Activated naive CD8-positive, alpha-beta T cell treated with anti-CD3 and anti-CD28 coated beads, Interleukin-2, amount 10 ng/mL, durations not matched to agents 7 days and 5 days (primary cell): ENCODE measurements at regions of chr1 and their contacts with region 1.

Region 1: GRCh38 chr1:209769171-209769904 is 13.5 kb downstream of the TRAF3IP3 start:
- DNase-seq: peak; percentile 67
- ATAC-seq: peak; percentile 62
- H3K4me3 Mint-ChIP-seq: no peak overlapping the region
- H3K27ac Mint-ChIP-seq: no peak overlapping the region
- H3K4me1 Mint-ChIP-seq: peaks cover 41% of the 10 kb centered on the region
- H3K27me3 Mint-ChIP-seq: no peaks in the 10 kb centered on the region

Region 2: DNA sequence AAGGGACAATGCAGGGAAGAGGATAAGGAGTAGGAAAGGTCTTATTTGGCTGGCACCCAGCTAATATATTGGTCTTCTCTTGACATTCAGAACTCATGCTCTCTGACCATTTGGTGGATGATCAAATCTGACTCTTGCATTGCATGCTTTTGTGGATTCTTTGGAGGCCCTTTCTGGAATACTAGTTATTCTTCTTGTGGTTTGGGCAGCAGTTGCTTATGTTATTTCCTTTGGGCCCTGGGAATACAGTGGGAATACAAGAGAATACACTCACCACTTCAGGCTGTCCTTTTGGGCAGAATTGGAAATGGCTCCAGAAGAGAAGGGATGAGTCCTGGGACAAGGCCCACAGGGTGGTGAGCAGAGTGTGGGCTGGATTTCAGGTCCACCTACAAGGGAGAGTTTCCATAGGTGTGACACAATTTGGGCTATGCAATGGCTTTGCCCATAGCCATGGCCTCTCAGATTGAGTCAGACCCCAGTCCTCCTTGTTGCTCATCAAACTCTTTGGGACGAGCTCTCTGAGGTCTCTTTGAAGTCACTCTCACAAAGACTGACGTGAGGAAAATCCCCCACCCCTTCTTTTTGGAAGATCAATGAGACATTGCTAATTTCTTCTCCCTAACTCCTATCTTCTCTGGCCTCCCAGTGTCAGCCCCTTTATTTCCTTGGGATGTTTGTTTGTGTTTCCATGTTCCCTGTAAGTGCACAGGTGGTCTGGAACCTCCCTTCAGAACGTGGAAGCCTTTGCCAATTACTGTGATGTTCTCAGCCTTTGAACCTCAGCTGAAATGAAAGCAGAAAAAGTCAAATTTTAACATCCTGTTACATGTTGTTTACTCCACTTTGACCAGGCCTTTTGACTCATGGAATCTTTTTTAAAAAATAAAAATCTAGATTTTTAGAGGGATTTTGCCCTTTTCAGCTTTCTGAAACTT is 45.3 kb before region 1 on chr1:
- POLR2A ChIA-PET with region 1: no interaction called
- DNase-seq: no peak
- ATAC-seq: peak; percentile 67
- H3K4me3 Mint-ChIP-seq: peak overlapping the region; percentile 47
- H3K27ac Mint-ChIP-seq: peak overlapping the region; percentile 93
- H3K4me1 Mint-ChIP-seq: peaks cover 16% of the 10 kb centered on the region
- H3K27me3 Mint-ChIP-seq: no peaks in the 10 kb centered on the region

Region 3: DNA sequence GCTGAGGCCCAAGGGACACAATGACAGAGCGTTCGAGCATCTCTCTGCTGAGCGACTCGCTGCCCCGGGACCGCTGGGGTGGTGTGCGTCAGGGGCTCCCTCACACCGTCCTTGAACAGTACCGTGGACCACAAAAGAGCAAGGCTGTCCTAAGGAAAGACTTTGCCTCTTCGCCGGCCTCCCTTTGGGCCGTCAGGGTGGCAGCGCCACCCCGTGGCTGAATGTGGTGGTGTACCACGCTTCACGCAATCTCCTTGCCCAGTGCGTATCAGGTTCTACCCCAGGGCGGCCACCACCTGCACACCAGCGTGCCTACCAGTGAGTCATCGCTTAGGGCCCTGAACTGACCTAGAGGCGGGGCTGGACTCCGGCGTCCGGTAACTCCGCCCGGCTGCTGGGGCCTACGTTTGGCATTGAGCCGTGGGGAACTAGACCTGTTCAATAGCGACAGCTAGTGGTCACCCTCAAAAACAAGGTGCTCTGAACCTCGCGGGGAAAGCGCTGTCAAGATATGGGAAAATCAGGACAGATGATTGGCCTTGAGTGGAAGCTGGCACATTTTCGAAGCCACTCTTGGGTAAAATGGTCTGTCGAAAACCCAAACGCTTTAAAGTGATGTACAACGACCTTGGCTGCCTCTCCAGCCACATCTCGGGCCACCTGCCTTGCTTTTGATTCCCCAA is 21.6 kb before region 1 on chr1:
- POLR2A ChIA-PET with region 1: interaction called, 488 read pairs
- DNase-seq: peak; percentile 91
- ATAC-seq: peak; percentile 82
- H3K4me3 Mint-ChIP-seq: peak overlapping the region; percentile 78
- H3K27ac Mint-ChIP-seq: peak overlapping the region; percentile 92
- H3K4me1 Mint-ChIP-seq: peaks cover 46% of the 10 kb centered on the region
- H3K27me3 Mint-ChIP-seq: no peaks in the 10 kb centered on the region

Region 4: GRCh38 chr1:209784265-209785169 is 15.2 kb after region 1 on chr1 and contains the start of gene C1orf74:
- POLR2A ChIA-PET with region 1: interaction called, 88 read pairs
- DNase-seq: peak; percentile 99
- ATAC-seq: peak; percentile 99
- H3K4me3 Mint-ChIP-seq: peak within 1 kb of the TSS; percentile 90
- H3K27ac Mint-ChIP-seq: peak within 1 kb of the TSS; percentile 94
- H3K4me1 Mint-ChIP-seq: peaks cover 35% of the 10 kb centered on the region
- H3K27me3 Mint-ChIP-seq: no peaks in the 10 kb centered on the region
- total RNA-seq, gene C1orf74: 2.2 to 2.8 TPM

Region 5: DNA sequence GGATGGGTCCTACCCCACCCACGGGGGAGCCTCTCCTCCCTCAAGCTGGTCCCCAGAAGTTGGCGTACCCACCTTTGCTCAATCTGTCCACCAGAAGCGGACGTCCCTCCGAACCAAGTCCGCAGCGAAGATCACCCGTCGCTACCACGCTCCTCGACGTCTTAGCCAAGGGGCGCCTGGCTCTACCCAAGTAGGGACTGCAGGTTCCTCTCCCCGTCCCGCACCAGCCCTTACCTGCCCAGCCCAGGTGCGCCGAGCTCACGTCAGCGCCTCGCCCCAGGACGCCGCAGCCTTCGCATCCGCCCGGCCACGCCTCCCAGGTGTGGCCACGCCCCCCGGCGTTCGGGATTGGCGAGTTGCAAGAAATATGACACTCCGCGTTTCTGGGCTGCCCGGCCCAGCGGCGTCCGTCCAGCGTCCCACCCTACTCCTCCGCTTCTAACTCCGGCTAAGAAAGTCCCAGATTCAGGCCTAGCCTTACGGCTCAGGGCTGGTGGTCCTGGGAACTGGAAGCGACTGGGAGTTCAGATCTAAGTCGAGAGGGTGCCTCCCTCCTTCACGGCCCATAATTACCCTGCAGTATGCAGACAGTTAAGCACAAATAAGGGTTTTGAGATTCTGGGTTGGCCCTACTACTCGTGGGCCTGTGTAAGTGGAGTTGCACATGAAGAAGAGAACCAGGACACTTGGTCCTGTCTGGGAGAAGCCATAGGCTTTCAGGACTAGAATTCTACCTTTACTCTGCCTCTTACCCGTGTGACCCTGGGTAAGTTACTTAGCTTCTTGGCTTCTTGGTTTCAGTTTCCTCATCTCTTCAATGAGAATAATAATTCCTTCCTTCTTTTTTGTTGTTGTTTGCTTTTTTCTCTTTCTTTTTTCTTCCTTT is 36.8 kb after region 1 on chr1 and contains the start of gene IRF6:
- POLR2A ChIA-PET with region 1: interaction called, 14 read pairs
- DNase-seq: peak; percentile 82
- ATAC-seq: peak; percentile 84
- H3K4me3 Mint-ChIP-seq: peak within 1 kb of the TSS; percentile 91
- H3K27ac Mint-ChIP-seq: peak within 1 kb of the TSS; percentile 91
- H3K4me1 Mint-ChIP-seq: peaks cover 7% of the 10 kb centered on the region
- H3K27me3 Mint-ChIP-seq: peaks cover 2% of the 10 kb centered on the region
- total RNA-seq, gene IRF6: 1.7 to 2.0 TPM

Region 6: GRCh38 chr1:209823143-209824041 is 54.1 kb after region 1 on chr1:
- POLR2A ChIA-PET with region 1: interaction called, 10 read pairs
- DNase-seq: no peak
- ATAC-seq: peak; percentile 38
- H3K4me3 Mint-ChIP-seq: no peak overlapping the region
- H3K27ac Mint-ChIP-seq: no peak overlapping the region
- H3K4me1 Mint-ChIP-seq: peaks cover 15% of the 10 kb centered on the region
- H3K27me3 Mint-ChIP-seq: peaks cover 10% of the 10 kb centered on the region